Right ventricle myocardium inferior (tissue), 1 donor: ENCODE measurements at regions of chr11 and their contacts with region 1.

Region 1: GRCh38 chr11:78139422-78140391 is at the start of gene ALG8:
- DNase-seq: peak; percentile 98
- ATAC-seq: peak; percentile 99
- total RNA-seq, gene ALG8: 16.7 TPM

Region 2: DNA sequence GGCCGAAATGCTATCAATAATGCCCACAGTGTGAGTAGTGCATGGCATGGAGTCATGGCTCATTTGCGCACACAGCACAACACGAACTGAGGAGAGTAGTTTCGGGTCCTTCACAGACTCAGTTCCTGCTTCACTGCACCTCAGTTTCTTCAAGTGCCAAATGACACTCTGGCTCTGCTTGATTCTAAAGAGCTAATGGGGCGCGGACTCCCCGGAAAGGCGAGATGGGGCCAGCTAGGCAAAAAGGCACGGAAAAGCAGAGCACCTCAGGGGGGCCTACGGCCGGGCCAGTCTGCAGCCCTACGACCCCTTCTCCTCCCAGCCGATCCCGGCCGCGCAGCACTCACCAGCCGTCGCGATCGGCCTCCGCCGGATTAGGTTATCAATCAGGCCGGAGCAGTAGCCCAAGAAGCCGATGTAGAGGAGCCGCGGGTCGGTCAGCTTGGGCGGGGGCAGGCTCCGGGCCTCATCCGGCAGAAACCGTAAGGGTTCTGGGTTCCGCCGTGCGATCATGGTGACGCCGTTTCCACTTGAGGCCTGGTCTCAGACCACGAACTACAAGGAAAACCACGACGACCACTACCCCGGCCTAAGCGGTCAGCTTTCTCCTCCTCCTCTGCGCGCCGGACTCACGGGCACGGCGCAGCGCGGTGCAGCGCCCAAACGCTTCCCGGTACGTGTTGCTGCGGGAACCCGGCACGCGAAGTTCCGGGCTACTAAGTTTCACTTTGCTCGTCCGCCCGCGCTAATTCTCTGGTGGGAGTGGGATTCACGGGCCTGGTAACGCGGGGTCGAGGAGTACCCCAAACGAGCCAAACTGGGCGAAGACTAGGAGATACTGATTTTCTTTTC is 60.2 kb before region 1 on chr11 and contains the start of gene NDUFC2:
- intact Hi-C with region 1: loop called (anchors 5 kb)
- DNase-seq: peak; percentile 91
- ATAC-seq: peak; percentile 92
- total RNA-seq, gene NDUFC2: 337 TPM

Region 3: GRCh38 chr11:78156105-78156830 is 16.6 kb after region 1 on chr11:
- intact Hi-C with region 1: no loop called
- DNase-seq: no peak
- ATAC-seq: no peak

Region 4: GRCh38 chr11:78168539-78169477 is 29.1 kb after region 1 on chr11:
- intact Hi-C with region 1: loop called (anchors 1 kb)
- DNase-seq: peak; percentile 90
- ATAC-seq: peak; percentile 94